Colonic mucosa (tissue), 4 donors: ENCODE measurements at regions of chr3 and their contacts with region 1.

Region 1: DNA sequence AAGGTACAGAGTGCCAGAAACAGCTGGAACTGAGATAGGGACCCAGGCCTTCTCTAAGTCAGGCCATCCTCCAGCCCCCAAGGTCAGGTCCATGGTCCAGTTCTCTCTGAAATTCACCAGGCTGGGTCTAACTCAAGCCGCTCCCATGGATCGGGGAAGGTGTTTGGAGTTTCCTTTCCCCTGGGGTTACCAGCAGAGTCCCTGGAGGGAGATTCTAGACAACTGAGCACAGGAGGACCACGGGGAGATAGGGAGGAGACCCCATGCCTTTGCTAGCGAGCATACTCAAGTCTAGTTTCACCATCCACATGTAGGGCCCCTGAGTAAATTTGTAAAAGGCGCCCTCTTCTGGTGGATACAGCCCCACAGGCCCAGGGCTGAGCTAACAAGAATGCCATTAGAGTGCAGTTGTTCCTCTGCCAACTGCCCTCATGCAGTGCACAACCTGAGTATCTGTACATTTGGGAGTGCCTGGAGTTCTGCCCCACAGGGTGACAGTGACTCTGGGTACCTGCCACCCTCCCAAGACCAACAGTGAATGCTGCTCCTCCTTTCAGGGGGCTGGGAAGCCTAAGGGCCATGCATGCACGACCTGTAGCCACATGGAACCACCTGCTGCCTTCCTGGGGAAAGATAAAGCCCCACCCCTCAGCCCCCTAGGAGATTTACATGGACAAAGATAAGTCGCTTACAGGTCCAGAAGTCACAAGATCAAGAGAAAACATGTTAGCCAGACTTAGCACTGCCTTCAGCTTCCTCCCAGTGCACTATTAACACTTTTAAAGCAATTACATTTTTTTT is 89.0 kb downstream of the IQSEC1 start:
- DNase-seq: peak; percentile 78
- H3K4me3 ChIP-seq: no peak overlapping the region
- H3K27ac ChIP-seq: no peak overlapping the region
- H3K4me1 ChIP-seq: no peaks in the 10 kb centered on the region
- H3K27me3 ChIP-seq: no peaks in the 10 kb centered on the region
- CTCF ChIP-seq: peak; percentile 77

Region 2: GRCh38 chr3:12891985-12892839 is 92.0 kb before region 1 on chr3:
- intact Hi-C with region 1: loop called (anchors 10 kb)
- DNase-seq: peak; percentile 40
- H3K4me3 ChIP-seq: peak overlapping the region; percentile 15
- H3K27ac ChIP-seq: no peak overlapping the region
- H3K4me1 ChIP-seq: peaks cover 4% of the 10 kb centered on the region
- H3K27me3 ChIP-seq: no peaks in the 10 kb centered on the region
- CTCF ChIP-seq: peak; percentile 85